Mammary epithelial cell (primary cell): ENCODE measurements at regions of chr7 and their contacts with region 1.

Region 1: GRCh38 chr7:72196176-72196575 is 216.0 kb downstream of the CALN1 start:
- DNase-seq: no peak
- H3K4me3 ChIP-seq: no peak overlapping the region
- H3K27ac ChIP-seq: no peak overlapping the region
- H3K4me1 ChIP-seq: no peaks in the 10 kb centered on the region
- H3K27me3 ChIP-seq: no peaks in the 10 kb centered on the region
- CTCF ChIP-seq: no peak

Region 2: DNA sequence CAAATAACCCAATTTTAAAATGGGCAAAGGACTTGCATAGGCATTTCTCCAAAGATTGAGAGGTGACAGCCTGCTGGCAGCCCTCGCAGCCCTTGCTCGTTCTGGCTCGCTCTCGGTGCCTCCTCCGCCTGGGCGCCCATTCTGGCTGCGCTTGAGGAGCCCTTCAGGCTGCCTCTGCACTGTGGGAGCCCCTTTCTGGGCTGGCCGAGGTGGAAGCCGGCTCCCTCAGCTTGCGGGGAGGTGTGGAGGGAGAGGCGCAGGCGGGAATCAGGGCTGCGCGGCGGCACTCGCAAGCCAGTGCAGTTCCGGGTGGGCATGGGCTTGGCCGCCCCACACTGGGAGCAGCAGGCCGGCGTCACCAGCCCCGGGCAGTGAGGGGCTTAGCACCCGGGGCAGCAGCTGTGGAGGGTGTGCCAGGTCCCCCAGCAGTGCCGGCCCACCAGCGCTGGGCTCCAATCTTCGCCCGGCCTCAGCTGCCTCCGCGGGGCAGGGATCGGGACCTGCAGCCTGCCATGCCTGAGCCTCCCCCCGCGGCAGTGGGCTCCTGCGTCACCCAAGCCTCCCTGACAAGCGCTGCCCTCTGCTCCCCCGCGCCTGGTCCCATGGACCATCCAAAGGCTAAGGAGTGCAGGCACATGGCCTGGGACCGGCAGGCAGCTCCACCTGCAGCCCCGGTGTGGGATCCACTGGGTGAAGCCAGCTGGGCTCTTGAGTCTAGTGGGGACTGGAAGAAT is 1118.3 kb before region 1 on chr7:
- CTCF ChIA-PET with region 1: interaction called, 13 read pairs
- dilution Hi-C with region 1: no loop called
- in situ Hi-C with region 1: no loop called
- intact Hi-C with region 1: no loop called
- DNase-seq: no peak
- H3K4me3 ChIP-seq: no peak overlapping the region
- H3K27ac ChIP-seq: no peak overlapping the region
- H3K4me1 ChIP-seq: no peaks in the 10 kb centered on the region
- H3K27me3 ChIP-seq: no peaks in the 10 kb centered on the region
- CTCF ChIP-seq: no peak

Region 3: GRCh38 chr7:72234086-72234485 is 37.9 kb after region 1 on chr7:
- CTCF ChIA-PET with region 1: no interaction called
- dilution Hi-C with region 1: no loop called
- in situ Hi-C with region 1: no loop called
- intact Hi-C with region 1: no loop called
- DNase-seq: no peak
- H3K4me3 ChIP-seq: no peak overlapping the region
- H3K27ac ChIP-seq: no peak overlapping the region
- H3K4me1 ChIP-seq: no peaks in the 10 kb centered on the region
- H3K27me3 ChIP-seq: no peaks in the 10 kb centered on the region
- CTCF ChIP-seq: no peak